ENCODE measurements at regions of chr11 and their contacts with region 1.

Region 1: GRCh38 chr11:36034551-36035331 is 90.9 kb downstream of the LDLRAD3 start:
- DNase-seq: no peak
- H3K4me3 ChIP-seq: no peak overlapping the region
- H3K27ac ChIP-seq: peak overlapping the region; percentile 47 to 58
- H3K4me1 ChIP-seq: peaks cover 17% of the 10 kb centered on the region
- H3K27me3 ChIP-seq: no peaks in the 10 kb centered on the region
- CTCF ChIP-seq: no peak
- POLR2A ChIP-seq: no peak

Region 2: DNA sequence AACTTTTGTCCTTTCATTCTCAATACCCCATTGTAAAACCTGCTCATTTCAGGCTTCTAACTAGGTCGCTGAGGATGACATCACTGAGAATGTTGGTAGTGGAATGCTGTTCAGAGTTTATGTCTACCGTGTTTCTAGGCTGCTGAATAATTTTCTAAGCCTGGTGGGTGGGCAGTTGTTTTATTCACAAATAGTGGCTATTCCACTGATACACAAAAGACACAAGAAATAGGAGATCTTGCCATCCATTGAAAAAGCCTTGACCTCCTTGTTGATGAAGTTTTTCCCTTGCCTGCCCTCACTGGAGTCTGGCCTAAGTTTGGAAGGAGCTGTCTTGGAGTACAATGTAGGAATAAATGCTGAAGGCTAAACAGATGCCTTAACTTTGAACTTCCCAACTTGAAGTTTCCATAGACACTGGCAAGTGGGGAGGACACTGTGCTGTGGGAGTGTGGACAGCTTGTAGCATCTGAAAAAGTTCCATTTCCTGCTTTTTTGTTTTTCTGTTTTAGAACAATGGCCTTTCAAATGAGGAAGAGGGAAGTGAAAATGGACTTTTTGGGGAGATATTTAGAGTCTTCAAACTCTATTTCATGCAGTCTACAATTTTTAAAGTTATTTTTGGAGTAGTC is 313.0 kb before region 1 on chr11:
- intact Hi-C with region 1: no loop called
- DNase-seq: no peak
- H3K4me3 ChIP-seq: no peak overlapping the region
- H3K27ac ChIP-seq: no peak overlapping the region
- H3K4me1 ChIP-seq: no peaks in the 10 kb centered on the region
- H3K27me3 ChIP-seq: no peaks in the 10 kb centered on the region
- CTCF ChIP-seq: no peak
- POLR2A ChIP-seq: no peak

Region 3: DNA sequence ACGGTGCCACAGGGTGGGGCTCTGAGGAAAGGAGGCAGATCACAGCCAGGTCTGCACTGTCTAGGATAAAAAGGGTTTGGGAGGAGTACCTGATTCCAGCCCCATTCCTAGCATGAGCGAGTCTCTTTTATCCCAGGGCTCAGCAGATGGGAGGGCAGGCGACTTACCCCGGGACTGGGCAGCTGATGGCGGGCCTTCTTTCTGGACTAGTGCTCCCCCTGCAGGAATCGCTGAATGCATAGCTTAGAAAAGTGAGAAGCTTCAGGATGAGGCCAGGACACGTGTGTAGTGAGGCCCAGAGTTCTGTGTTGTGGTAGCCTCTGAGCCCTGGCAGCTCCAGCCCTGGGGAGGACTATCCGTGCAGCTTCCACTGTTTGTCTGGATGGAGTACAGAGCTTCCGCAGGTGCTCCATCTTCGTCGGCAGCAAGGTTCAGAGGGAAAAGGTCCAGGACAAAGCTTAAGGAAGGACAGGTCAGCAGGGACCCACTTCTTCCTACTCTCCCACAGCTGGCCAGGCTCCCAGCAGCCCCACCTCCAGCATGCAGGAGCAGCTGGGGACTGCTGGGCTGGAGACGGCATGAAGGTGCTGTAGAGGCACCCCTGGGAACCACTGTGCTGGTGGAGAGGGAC is 224.1 kb after region 1 on chr11:
- intact Hi-C with region 1: loop called (anchors 5 kb)
- DNase-seq: peak; percentile 25
- H3K4me3 ChIP-seq: no peak overlapping the region
- H3K27ac ChIP-seq: no peak overlapping the region
- H3K4me1 ChIP-seq: no peaks in the 10 kb centered on the region
- H3K27me3 ChIP-seq: no peaks in the 10 kb centered on the region
- CTCF ChIP-seq: peak in 3 of 4 experiments; percentile 38 to 53 (median 44)
- POLR2A ChIP-seq: no peak